Uterus (tissue), 4 donors: ENCODE measurements at regions of chr4 and their contacts with region 1.

Region 1: DNA sequence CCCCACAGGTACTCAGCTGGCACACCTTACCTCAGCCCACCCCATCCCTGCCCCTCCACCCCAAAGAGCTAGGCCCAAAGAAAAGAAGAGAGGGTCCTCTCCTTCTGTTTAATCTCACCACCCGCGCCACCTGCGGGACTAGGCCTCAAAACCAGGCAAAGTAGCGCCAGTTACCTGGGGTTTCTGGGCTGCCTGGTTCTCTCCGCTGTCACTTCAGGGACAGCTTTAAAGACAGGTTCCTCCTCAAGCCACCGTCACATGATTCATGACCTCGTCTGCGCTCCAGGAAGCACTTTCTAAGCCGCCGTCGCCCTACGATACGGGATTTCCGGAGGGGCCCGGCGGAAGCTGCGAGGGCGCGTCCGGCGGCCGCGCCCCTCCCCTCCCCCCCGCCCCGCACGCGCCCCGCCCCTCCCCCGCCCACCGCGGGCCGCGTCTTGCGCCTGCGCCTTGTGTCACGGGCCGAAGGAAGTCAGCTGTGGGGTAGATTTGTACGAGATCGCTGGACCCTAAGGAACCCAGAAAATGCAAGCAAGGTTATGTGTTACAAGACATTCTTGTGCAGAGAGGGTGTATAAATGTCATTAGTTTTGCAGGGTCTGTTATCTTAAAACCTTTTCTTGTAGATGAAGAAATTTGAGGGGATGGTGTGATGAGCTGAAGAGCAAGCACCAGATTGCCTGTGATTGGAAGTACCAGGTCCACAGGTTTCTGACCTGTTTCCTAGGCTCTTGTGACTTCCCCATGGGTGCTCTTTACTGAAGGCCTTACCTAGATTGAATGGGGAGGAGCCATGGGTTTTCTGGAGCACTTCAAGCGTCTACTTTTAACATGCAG is at the start of gene LAMTOR3:
- DNase-seq: peak; percentile 89
- H3K4me3 ChIP-seq: peak within 1 kb of the TSS; percentile 87 to 93
- H3K27ac ChIP-seq: peak within 1 kb of the TSS; percentile 85 to 86
- H3K4me1 ChIP-seq: no peaks in the 10 kb centered on the region
- H3K27me3 ChIP-seq: no peaks in the 10 kb centered on the region
- CTCF ChIP-seq: peak in 2 of 4 experiments; percentile 0 to 17
- POLR2A ChIP-seq: peak; percentile 20 to 38
- total RNA-seq, gene LAMTOR3: 37.9 to 87.0 (median 40.3) TPM

Region 2: DNA sequence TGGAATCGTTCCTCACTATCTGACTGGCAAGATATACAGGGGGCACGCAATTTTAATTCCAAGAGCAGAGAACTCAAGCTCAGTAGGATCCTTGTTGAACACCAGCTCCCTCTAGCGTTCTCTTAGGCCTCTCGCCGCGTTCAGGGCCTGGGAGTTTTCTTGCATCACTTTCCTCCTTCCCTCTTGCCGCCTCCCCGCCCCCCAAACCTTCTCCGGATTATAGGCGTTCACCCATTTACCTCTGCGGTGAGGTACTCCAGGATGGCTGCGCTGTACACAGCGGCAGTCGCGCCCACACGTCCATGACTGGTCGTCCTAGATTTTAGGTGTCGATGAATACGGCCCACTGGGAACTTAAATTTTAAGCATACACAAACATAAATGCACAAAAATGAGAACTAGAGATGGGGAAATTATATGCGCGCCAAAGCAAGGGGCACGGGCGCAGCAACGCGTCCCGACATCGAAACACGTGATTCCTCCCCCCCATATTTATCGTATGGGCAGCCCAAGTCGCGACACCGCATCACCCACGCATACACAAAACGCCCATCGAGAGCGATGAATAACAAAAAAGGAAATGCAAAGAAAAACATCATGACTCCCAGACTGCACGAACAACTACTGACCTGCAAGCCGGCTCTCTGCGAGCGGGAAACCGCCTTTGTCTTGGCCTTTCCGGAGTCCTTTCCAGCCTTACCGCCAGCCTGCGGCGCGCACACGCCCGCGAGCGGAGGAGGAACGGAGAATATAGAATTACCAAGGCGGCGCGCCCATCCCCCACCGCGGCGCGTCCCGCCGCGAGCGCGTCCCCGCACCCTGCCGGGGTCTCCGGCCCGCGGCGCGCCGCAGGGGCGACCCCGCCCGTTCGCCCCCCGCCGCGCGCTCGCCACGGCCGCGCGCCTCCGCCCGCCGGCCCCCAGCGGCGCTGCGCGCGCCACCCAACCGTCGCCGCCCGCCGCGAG is 54.9 kb after region 1 on chr4:
- intact Hi-C with region 1: loop called (anchors 10 kb)
- DNase-seq: peak; percentile 86 to 91
- H3K4me3 ChIP-seq: peak overlapping the region; percentile 83 to 90
- H3K27ac ChIP-seq: peak overlapping the region; percentile 92 to 97
- H3K4me1 ChIP-seq: no peaks in the 10 kb centered on the region
- H3K27me3 ChIP-seq: no peaks in the 10 kb centered on the region
- CTCF ChIP-seq: peak; percentile 76 to 86 (median 86)
- POLR2A ChIP-seq: no peak